Endothelial cell of umbilical vein (primary cell): ENCODE measurements at regions of chr4 and their contacts with region 1.

Region 1: DNA sequence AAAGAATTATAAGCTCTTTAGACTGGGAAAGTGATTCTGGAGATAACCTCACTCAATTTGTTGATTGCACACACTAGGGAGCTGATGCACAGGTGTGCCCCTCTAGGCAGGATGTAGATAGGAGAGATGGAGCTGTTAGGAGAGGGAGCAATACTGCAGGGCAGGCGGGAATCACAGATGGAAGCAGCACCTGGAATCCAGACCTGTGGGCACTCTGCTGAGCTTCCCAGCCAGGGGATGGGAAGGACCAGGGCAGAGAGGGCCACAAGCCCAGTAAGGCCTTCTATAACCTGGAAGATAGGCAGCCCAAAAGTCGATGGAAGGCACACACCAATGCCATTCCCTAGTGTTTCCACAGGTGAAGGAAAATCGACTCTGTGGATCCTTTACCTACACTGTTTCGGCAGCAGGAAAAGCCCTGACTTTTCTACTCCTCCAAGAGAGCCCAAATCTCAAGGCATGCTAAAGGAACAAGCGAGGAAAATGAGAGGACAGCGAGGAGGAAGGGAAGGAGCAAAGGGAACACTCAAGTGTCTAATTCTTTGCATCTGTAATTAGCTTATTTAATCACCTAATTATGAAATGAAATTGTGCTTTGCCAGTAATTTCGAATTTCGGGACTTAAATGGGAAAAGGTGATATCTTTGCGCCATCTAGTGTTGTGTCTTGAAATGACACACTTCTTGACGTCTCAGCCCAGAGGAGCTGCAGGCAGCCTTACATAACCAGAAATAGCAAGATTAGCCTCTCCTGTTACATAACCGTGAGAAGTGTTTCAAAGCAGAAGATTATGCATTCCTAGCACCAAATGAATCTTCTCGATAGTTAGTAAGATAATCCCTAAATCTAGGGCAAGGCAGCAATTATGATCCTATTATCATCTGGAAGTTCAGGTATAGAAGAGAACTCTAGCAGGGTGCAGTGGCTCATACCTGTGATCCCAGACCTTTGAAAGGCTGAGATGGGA is 31.0 kb upstream of the TLR3 start:
- DNase-seq: peak; percentile 85
- H3K4me3 ChIP-seq: no peak overlapping the region
- H3K27ac ChIP-seq: no peak overlapping the region
- H3K4me1 ChIP-seq: no peaks in the 10 kb centered on the region
- H3K27me3 ChIP-seq: peaks cover 3 to 5% of the 10 kb centered on the region in 2 experiments
- CTCF ChIP-seq: peak; percentile 55 to 59
- POLR2A ChIP-seq: no peak

Region 2: DNA sequence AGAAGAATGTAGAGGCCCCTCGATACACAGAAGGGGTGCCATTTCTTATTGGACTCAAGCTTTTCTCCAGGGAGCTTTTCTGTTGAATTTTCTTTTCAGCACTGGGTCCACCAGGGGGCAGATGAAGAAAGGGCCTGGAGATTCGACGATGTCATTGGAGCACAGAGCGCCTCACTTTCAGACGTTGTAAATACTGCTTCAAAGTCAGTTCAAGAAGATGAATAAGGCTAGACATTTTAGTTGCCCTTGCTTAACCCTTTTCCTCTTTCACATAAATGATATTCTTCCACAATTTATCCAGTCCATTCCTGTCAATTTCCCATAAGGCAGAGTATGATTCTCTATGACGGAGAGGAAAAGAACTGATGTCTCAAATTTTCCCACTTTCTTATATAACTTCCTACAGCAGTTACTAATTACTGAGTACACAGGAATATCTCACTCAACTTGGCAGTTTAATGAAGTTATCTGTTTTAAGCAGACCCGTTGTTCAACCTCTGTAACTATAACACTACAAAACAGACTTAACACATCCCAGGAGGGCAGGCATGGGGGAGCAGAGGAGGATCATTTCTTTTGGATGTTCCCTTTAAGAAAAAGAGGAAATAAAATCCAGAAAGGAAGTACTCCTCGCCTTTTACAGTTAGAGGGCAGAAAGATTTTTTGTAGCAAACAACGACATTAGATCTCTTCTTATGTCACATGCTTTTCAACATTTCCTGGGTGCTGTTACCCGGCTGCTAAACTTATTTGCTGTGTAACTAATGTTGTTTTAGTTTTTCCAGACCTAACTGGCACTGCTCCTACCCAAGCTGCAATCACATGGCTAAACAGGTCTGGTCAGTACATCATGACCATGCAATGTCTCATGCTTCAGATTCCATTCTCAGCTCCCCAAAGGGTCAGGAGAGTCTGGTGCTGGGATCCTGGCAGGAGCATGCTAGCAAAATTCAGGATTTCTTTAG is 1291.9 kb before region 1 on chr4:
- CTCF ChIA-PET with region 1: interaction called, 11 read pairs
- POLR2A ChIA-PET with region 1: no interaction called
- dilution Hi-C with region 1: no loop called
- intact Hi-C with region 1: no loop called
- DNase-seq: peak; percentile 76
- H3K4me3 ChIP-seq: no peak overlapping the region
- H3K27ac ChIP-seq: no peak overlapping the region
- H3K4me1 ChIP-seq: peaks cover 4% of the 10 kb centered on the region
- H3K27me3 ChIP-seq: no peaks in the 10 kb centered on the region
- CTCF ChIP-seq: peak; percentile 70 to 72
- POLR2A ChIP-seq: no peak

Region 3: GRCh38 chr4:185134307-185134869 is 903.6 kb before region 1 on chr4:
- CTCF ChIA-PET with region 1: interaction called, 23 read pairs
- POLR2A ChIA-PET with region 1: no interaction called
- dilution Hi-C with region 1: no loop called
- intact Hi-C with region 1: no loop called
- DNase-seq: peak; percentile 56
- H3K4me3 ChIP-seq: no peak overlapping the region
- H3K27ac ChIP-seq: no peak overlapping the region
- H3K4me1 ChIP-seq: peaks cover 4% of the 10 kb centered on the region
- H3K27me3 ChIP-seq: no peaks in the 10 kb centered on the region
- CTCF ChIP-seq: peak; percentile 32 to 53
- POLR2A ChIP-seq: no peak

Region 4: DNA sequence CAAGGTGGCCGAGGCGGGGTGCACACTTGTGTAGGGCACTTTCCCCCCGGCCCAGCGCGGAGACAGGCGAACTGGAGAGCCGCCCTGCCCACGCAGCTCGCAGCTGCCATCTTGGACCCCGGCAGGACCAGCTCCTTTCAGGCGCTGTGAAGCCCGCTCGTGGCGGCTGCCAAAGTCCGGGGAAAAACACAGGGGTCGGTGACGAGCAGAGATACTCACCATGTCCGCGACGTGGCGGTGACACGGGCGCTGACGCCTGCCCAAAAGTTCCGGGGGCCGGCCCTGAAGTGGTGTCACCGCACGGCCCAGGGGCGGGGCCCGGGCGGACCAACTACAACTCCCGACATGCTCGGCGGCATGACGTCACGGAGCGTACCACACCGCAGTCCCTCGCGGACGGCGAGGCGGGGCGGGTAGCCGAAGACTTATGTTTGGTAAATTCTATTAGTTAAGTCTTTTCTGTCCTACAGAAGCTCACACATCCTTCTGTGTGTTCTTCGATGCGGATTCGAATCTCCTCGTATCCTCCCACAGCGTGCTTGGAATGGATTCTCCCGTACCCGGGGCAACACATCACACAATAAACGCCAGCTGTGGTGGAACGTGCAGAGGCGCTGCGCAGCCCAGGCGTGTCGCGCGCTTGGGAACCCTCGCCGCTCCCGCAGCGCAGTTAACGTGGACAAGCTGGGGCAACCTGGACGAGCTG is 612.2 kb before region 1 on chr4 and contains the start of gene UFSP2:
- CTCF ChIA-PET with region 1: interaction called, 5 read pairs
- POLR2A ChIA-PET with region 1: no interaction called
- dilution Hi-C with region 1: no loop called
- intact Hi-C with region 1: loop called (anchors 1 kb)
- DNase-seq: peak; percentile 93
- H3K4me3 ChIP-seq: peak within 1 kb of the TSS; percentile 59 to 90 (median 69)
- H3K27ac ChIP-seq: peak within 1 kb of the TSS; percentile 96
- H3K4me1 ChIP-seq: peaks cover 8% of the 10 kb centered on the region
- H3K27me3 ChIP-seq: no peaks in the 10 kb centered on the region
- CTCF ChIP-seq: no peak
- POLR2A ChIP-seq: no peak
- total RNA-seq, gene UFSP2: 25.2 and 26.7 TPM in 2 replicates

Region 5: GRCh38 chr4:185625503-185625902 is 412.5 kb before region 1 on chr4:
- CTCF ChIA-PET with region 1: interaction called, 15 read pairs
- POLR2A ChIA-PET with region 1: no interaction called
- dilution Hi-C with region 1: loop called (anchors 25 kb)
- intact Hi-C with region 1: no loop called
- DNase-seq: peak; percentile 7
- H3K4me3 ChIP-seq: no peak overlapping the region
- H3K27ac ChIP-seq: no peak overlapping the region
- H3K4me1 ChIP-seq: no peaks in the 10 kb centered on the region
- H3K27me3 ChIP-seq: no peaks in the 10 kb centered on the region
- CTCF ChIP-seq: no peak
- POLR2A ChIP-seq: no peak

Region 6: DNA sequence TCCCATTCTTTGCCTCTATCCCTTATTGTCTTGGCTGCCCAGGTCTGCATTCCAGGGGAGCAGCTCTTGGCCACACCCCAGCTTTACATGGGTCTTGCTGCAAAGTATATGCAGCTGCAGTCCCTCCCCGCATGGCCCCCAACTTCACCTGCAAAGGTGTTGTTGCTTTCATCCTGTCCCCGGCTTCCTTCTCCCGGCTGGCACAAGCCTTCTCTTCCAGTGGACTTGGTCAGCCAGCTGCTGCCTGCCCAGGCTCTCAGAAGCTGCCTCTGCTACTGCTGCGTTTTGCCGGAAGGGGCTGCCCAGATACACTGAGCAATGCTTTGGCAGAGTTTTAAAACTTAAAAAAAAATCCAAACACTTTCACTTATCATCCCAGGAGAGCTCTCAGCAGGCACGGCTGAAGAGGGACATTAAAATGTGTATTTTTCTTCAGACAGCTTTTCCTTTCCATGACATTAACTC is 381.5 kb before region 1 on chr4:
- CTCF ChIA-PET with region 1: interaction called, 31 read pairs
- POLR2A ChIA-PET with region 1: no interaction called
- dilution Hi-C with region 1: no loop called
- intact Hi-C with region 1: no loop called
- DNase-seq: peak; percentile 61
- H3K4me3 ChIP-seq: peak overlapping the region in 1 of 3 experiments; percentile 5
- H3K27ac ChIP-seq: no peak overlapping the region
- H3K4me1 ChIP-seq: peaks cover 4% of the 10 kb centered on the region
- H3K27me3 ChIP-seq: no peaks in the 10 kb centered on the region
- CTCF ChIP-seq: peak; percentile 28 to 43
- POLR2A ChIP-seq: no peak

Region 7: DNA sequence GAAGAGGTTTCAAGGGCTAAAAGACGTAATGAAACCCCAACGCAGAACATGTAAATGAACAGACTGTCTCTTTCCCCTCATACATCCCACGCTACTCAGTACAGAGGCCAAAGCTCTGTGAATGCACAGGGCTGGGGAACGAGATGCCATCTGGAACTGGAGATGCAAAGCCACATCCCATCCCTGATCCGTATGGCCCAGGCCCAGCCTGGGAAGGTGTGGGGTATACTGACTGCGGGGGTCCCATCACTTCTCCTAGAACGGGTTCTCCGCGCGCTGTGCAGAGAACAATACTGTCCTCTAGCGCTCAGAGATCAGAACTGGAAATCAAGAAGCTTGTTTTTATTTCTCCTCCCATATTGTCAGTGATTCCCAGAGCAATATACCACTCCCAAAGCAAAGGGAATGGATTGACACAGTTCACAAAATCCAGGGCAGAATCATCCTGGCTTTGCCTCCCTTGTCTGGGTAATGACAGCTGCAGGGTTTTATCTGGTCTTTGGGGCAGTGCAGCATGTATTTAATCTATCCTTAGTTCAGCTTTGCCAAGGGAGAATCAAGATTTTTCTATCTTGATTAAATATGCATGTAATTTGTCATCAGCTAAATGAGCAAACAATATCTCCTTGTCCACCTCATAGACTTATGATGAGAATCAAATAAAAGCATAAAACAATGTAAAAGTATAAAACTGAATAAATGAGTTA is 16.4 kb before region 1 on chr4:
- CTCF ChIA-PET with region 1: interaction called, 91 read pairs
- POLR2A ChIA-PET with region 1: no interaction called
- dilution Hi-C with region 1: no loop called
- intact Hi-C with region 1: no loop called
- DNase-seq: peak; percentile 69
- H3K4me3 ChIP-seq: no peak overlapping the region
- H3K27ac ChIP-seq: no peak overlapping the region
- H3K4me1 ChIP-seq: no peaks in the 10 kb centered on the region
- H3K27me3 ChIP-seq: no peaks in the 10 kb centered on the region
- CTCF ChIP-seq: peak; percentile 73 to 82
- POLR2A ChIP-seq: no peak

Region 8: GRCh38 chr4:186360551-186360950 is 322.6 kb after region 1 on chr4:
- CTCF ChIA-PET with region 1: no interaction called
- POLR2A ChIA-PET with region 1: no interaction called
- dilution Hi-C with region 1: no loop called
- intact Hi-C with region 1: no loop called
- DNase-seq: no peak
- H3K4me3 ChIP-seq: no peak overlapping the region
- H3K27ac ChIP-seq: no peak overlapping the region
- H3K4me1 ChIP-seq: no peaks in the 10 kb centered on the region
- H3K27me3 ChIP-seq: no peaks in the 10 kb centered on the region
- CTCF ChIP-seq: no peak
- POLR2A ChIP-seq: no peak

Region 9: DNA sequence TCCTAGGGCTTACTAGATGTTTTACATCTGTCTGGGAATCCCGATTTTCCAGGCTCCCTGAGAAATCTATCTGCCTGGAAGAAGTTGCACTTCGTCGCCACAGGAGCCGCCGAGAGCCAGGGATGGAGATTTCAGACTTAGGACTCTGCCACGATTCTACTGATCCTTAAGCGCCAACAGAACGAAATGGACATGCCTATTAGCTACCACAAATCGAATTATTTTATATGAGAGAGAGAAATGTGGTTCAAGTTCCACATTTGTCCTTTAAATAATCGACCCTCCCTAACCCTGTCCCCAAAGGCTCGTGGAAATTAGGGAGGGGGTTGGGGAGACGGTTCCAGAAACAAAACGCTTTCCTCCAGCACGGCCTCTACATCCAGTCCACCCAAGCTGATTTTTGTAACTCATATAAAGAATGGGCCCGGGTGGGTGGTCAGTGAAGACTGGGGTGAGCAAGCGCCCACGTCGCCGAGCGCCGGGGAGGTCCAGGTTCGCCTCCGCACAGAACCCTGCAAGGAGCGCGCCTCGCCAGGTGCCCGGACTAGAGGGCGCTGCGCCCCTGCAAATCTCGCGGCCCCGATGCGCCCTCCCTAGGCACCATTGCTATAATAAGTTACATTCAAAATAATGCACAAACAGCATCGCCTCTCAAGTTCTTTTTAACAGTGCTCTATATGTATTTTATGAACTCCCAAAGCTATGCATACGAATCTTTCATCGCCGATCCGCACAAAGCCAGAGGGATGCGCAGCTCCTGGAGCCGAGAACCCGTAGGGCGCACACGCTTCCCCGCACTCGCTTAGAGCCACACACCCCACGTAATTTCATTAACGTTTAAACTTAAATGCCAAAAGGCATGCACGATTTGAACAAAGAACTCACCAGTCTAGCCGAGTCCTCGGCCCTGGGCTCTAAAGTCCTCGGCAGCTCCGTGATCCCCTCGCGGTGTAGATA is 687.8 kb after region 1 on chr4:
- CTCF ChIA-PET with region 1: no interaction called
- POLR2A ChIA-PET with region 1: no interaction called
- dilution Hi-C with region 1: no loop called
- intact Hi-C with region 1: no loop called
- DNase-seq: peak; percentile 72
- H3K4me3 ChIP-seq: peak overlapping the region in 2 of 3 experiments; percentile 44 to 50
- H3K27ac ChIP-seq: no peak overlapping the region
- H3K4me1 ChIP-seq: peaks cover 32% of the 10 kb centered on the region
- H3K27me3 ChIP-seq: peaks cover 37 to 69% of the 10 kb centered on the region in 2 experiments
- CTCF ChIP-seq: peak; percentile 61 to 83
- POLR2A ChIP-seq: no peak